ENCODE measurements at regions of chr20 and their contacts with region 1.

Region 1: DNA sequence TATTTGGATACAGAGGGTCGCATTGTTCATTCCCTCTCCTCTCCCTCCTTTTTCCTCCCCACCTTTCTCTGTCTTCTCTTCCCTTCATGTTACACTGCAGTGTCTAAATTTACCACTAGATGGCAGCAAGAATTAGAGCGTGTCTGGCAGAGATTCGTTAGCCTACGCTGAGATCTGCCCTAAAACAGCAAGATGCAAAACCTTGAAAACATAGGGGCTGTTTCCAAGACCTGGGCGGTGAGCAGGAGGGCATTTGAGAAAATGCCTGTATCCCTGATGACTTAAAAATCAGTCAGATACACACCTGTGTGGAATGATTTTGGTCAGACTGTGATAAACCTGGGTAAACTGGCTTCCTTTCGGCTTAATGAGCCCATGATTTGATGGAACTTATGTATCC is 101.5 kb upstream of the ISM1 start:
- DNase-seq: no peak

Region 2: DNA sequence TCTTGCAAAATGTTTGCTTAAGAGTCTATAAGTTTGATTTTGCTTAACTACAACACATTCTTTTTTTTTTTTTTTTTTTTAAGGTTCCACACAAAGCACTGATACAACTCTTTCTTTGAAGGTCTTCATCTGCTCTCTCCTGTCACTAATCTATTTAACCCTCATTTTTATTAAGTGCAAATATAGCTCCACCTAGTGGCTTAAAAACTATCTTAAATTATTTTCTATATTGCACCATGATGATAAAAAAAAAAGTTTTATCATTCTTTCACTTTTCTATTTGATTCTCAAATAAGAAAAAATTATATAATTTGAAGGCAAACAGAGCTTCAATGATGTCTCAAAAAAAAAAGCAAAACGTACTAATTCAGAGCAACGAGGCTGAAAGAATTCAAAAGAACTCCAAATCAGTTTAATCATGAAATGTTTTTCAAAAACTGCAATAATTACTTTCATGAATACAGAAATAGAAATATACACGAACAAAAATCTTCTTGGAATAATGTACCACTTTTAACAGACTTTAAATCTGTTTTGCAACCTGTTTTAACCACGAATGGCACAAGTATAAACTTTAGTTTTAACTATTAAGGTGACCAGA is 652.4 kb after region 1 on chr20:
- intact Hi-C with region 1: loop called (anchors 5 to 10 kb)
- DNase-seq: no peak